Activated CD4-positive, alpha-beta T cell treated with anti-CD3 and anti-CD28 coated beads, Interleukin-2, amount 10 ng/mL, durations not matched to agents 24 days and 14 days (primary cell): ENCODE measurements at regions of chr1 and their contacts with region 1.

Region 1: DNA sequence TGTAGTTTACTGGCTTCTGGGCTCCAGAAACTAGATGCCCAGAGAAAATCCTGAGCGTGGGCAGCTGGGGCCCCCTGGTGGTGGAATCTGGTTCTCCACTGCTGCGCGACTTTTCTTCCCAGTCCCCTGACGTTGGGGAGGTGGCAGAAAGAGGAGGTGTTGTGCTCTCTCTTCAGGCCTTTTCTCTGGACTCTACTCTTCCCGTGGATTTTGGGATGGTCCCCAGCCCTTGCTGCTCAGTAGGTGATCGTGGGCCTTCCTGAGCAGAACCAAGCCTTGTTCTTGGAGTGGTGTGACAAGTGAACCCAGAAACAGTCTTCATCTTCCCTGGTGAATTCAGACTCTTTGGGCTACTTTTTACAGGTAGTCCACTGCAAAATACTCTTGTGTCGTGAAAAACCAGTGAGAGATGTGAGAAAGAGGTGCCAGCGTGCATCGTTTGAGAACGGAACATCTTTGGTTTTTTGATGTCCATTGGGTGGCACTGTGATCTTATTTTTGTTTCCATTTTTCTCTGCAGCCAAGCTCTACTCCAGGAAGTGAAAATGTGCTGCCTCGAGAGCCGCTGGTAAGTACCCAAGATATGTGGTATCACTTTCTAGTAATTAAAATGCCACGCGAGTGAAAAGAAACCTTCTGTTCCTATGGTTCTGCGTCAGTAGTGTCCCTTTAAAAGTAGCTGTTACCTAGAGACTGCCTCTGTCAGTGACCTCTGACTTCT is 20.2 kb downstream of the PEX14 start:
- DNase-seq: peak; percentile 95
- H3K4me3 Mint-ChIP-seq: peak overlapping the region; percentile 85
- H3K27ac Mint-ChIP-seq: peak overlapping the region; percentile 91
- H3K4me1 Mint-ChIP-seq: peaks cover 48% of the 10 kb centered on the region
- H3K27me3 Mint-ChIP-seq: no peaks in the 10 kb centered on the region

Region 2: DNA sequence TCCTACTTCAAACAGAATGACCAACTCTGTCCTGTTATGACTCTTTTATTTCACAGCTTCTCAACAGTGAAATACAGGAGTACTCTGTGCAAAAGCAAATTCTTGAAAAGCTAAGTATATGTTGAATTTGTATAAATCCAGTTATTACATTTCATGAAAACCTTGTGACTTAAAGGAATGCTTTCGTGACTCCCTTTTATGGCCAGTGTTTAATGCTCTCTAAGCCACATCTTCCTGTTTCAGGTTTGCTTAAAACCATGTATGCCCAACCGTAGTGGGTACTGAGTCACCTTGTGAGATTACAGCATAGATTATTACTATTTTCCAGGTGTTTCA is 324.7 kb before region 1 on chr1:
- intact Hi-C with region 1: loop called (anchors 5 kb)
- DNase-seq: peak; percentile 77
- H3K4me3 Mint-ChIP-seq: peak overlapping the region; percentile 67
- H3K27ac Mint-ChIP-seq: peak overlapping the region; percentile 85
- H3K4me1 Mint-ChIP-seq: peaks cover 45% of the 10 kb centered on the region
- H3K27me3 Mint-ChIP-seq: no peaks in the 10 kb centered on the region

Region 3: GRCh38 chr1:10472220-10473144 is 22.4 kb before region 1 on chr1 and contains the start of gene DFFA:
- intact Hi-C with region 1: loop called (anchors 1 kb)
- DNase-seq: peak; percentile 98
- H3K4me3 Mint-ChIP-seq: peak within 1 kb of the TSS; percentile 98
- H3K27ac Mint-ChIP-seq: peak within 1 kb of the TSS; percentile 94
- H3K4me1 Mint-ChIP-seq: peaks cover 30% of the 10 kb centered on the region
- H3K27me3 Mint-ChIP-seq: no peaks in the 10 kb centered on the region
- total RNA-seq, gene DFFA: 57.4 and 58.2 TPM in 2 replicates

Region 4: GRCh38 chr1:10694633-10695627 is 200.0 kb after region 1 on chr1:
- intact Hi-C with region 1: loop called (anchors 5 kb)
- DNase-seq: peak; percentile 93
- H3K4me3 Mint-ChIP-seq: peak overlapping the region; percentile 84
- H3K27ac Mint-ChIP-seq: peak overlapping the region; percentile 77
- H3K4me1 Mint-ChIP-seq: peaks cover 26% of the 10 kb centered on the region
- H3K27me3 Mint-ChIP-seq: peaks cover 23% of the 10 kb centered on the region

Region 5: GRCh38 chr1:10941891-10942541 is 447.1 kb after region 1 on chr1:
- intact Hi-C with region 1: loop called (anchors 1 kb)
- DNase-seq: peak; percentile 90
- H3K4me3 Mint-ChIP-seq: no peak overlapping the region
- H3K27ac Mint-ChIP-seq: no peak overlapping the region
- H3K4me1 Mint-ChIP-seq: peaks cover 29% of the 10 kb centered on the region
- H3K27me3 Mint-ChIP-seq: peaks cover 59% of the 10 kb centered on the region